ENCODE measurements at regions of chr5 and their contacts with region 1.

Region 1: DNA sequence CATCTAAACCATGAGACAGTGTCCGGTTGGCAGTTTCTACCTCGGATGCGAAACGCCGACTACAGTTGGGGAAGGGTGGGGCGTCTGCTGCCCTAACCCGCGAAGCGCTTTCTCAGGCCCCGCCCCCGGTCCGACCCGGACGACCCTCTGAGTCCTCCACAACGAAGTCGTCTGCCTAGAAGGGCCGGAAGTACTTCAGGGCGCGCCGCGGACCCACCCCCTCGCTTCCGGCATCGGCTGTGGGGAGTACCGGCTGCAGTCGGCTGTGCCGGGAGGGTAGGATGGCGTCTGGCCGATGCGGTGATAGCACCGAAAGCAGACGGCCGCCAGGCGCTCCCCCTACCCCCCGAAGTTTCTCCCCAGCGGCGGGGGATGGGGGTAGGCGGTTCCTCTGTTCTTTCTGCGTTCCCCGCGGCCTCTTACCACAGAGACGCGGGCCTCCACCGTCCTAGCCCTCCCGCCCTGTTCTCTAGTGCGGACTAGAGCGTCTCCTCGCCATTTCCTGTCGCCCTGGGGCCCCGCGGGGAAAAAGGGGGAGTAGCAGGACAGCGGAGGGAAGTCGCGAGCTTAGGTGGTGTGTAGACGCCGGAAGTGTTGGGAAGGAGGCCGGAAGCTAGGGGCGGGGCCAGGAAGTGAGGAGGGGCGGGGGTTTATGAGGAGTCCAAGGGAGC is at the start of gene TRIM41:
- DNase-seq: peak; percentile 99
- H3K4me3 Mint-ChIP-seq: peak within 1 kb of the TSS; percentile 90
- H3K27ac Mint-ChIP-seq: peak within 1 kb of the TSS; percentile 99
- H3K4me1 Mint-ChIP-seq: peaks cover 44% of the 10 kb centered on the region
- H3K27me3 Mint-ChIP-seq: no peaks in the 10 kb centered on the region
- CTCF ChIP-seq: no peak
- total RNA-seq, gene TRIM41: 33.5 and 34.2 TPM in 2 replicates

Region 2: GRCh38 chr5:181138258-181138657 is 84.9 kb before region 1 on chr5:
- CTCF ChIA-PET with region 1: no interaction called
- intact Hi-C with region 1: no loop called
- DNase-seq: no peak
- H3K4me3 Mint-ChIP-seq: no peak overlapping the region
- H3K27ac Mint-ChIP-seq: no peak overlapping the region
- H3K4me1 Mint-ChIP-seq: peaks cover 8% of the 10 kb centered on the region
- H3K27me3 Mint-ChIP-seq: peaks cover 36% of the 10 kb centered on the region
- CTCF ChIP-seq: no peak

Region 3: DNA sequence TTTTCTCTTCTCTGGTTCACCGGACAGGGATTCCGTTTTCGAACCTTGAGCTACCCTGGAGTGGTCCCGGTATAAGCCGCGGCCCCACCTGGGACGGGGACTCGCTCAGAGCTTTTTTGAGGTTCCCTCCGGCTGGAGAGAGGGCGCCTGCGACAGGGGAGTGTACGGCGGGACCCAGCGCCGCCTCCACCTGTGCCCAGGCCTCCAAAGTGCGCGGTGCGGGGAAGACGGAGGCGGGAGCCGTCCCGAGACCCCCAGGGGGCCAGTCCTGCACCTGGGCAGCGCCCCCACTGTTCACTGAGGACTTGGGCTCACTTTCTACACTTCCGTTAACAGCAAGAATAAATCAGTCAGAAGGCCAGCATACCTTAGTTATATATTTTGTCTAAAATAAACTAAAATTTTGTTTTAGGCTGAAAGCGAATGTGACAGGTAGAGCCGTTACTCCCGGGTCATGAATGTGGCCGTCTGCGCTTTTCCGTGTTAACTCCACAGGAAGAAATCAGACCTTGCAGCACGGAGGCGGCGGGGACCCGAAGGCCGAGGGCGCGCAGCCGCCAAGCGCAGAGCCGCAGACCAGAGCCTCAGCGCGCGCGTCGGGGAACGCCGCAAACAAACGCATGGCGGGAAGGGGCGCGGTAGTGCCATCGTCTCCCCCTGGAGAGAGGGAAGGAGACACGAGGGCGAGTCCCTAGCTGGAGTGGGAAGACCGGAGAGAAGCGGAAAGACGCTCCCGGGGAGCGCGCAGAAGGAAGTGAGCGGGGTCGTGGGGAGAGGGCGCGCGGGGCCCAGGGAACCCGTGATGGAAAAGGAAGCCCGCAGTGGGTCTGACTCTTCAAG is 32.3 kb before region 1 on chr5:
- CTCF ChIA-PET with region 1: interaction called, 3 read pairs
- intact Hi-C with region 1: loop called (anchors 1 kb)
- DNase-seq: peak; percentile 59
- H3K4me3 Mint-ChIP-seq: peak overlapping the region; percentile 93
- H3K27ac Mint-ChIP-seq: peak overlapping the region; percentile 100
- H3K4me1 Mint-ChIP-seq: peaks cover 49% of the 10 kb centered on the region
- H3K27me3 Mint-ChIP-seq: peaks cover 17% of the 10 kb centered on the region
- CTCF ChIP-seq: peak; percentile 58

Region 4: GRCh38 chr5:181243512-181244343 is 20.5 kb after region 1 on chr5 and contains the start of gene RACK1:
- CTCF ChIA-PET with region 1: interaction called, 5 read pairs
- intact Hi-C with region 1: loop called (anchors 2 kb)
- DNase-seq: peak; percentile 90
- H3K4me3 Mint-ChIP-seq: peak within 1 kb of the TSS; percentile 76
- H3K27ac Mint-ChIP-seq: peak within 1 kb of the TSS; percentile 99
- H3K4me1 Mint-ChIP-seq: peaks cover 43% of the 10 kb centered on the region
- H3K27me3 Mint-ChIP-seq: no peaks in the 10 kb centered on the region
- CTCF ChIP-seq: no peak
- total RNA-seq, gene RACK1: 1,679 and 1,946 TPM in 2 replicates

Measured in Calu3 (cell line).